ENCODE measurements at regions of chr12 and their contacts with region 1.

Region 1: DNA sequence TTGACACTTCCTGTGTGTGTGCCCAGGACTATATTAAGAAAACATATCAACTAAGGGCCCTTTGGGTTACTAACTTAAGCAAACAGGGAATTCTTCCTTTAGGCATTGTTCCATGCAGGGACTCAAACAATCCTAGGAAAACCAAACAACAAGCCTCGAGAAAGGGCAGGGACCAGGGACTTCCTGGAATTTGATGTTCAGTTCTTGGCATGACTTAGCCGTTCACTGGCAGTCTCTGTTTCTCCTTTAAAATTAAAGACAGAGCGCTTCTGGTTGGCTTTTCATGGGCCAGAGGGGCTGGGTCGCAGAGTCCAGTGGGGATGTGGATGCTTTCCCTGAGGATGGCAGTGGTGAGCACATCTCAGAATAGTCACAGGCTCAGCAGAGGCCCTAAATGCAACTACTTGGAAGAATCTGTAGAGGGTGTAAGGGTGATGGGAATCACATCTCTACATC is 35.2 kb downstream of the RNFT2 start:
- DNase-seq: peak; percentile 26
- H3K27ac ChIP-seq: no peak overlapping the region
- CTCF ChIP-seq: no peak

Region 2: GRCh38 chr12:116910645-116911451 is 137.5 kb after region 1 on chr12 and contains the start of gene FBXW8:
- CTCF ChIA-PET with region 1: no interaction called
- POLR2A ChIA-PET with region 1: interaction called, 10 read pairs
- DNase-seq: peak; percentile 69
- H3K27ac ChIP-seq: peak within 1 kb of the TSS; percentile 80
- CTCF ChIP-seq: no peak

Region 3: GRCh38 chr12:116969615-116970580 is 196.6 kb after region 1 on chr12:
- CTCF ChIA-PET with region 1: no interaction called
- POLR2A ChIA-PET with region 1: no interaction called
- DNase-seq: no peak
- H3K27ac ChIP-seq: no peak overlapping the region
- CTCF ChIP-seq: no peak

Region 4: GRCh38 chr12:117011988-117012805 is 238.9 kb after region 1 on chr12:
- CTCF ChIA-PET with region 1: no interaction called
- POLR2A ChIA-PET with region 1: no interaction called
- DNase-seq: peak; percentile 49
- H3K27ac ChIP-seq: no peak overlapping the region
- CTCF ChIP-seq: no peak